ENCODE measurements at regions of chr7 and their contacts with region 1.

Region 1: DNA sequence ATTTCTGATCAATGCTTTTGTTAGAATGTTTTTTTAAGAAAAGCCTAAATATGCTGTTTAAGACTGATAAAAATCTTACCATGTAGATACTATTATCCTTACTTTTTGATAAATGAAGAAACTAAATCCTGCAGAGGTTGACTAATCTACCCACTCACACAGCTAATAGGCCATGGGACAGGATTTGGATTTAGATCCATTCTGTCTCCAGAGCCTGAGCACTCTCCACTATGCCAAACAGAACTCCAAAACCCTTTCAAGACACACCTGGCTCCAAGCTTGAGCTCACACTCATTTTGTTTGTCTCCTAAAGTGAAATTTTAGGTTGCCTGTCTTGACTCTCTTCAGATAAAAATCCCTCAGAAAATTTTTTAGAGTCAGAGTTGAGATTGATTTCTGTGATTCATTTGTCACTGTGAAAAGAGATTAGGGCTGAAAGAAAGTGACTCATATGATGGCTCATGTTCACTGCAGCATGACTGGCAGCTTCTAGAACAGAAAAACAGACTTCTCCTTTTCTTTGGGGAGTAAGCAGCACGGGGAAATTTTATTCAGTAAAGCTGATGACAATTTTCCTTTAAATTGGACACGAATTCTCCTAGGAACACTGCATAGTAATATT is 132.3 kb upstream of the POT1 start:
- DNase-seq: no peak
- H3K4me3 ChIP-seq: no peak overlapping the region
- H3K27ac ChIP-seq: peak overlapping the region in 1 of 2 experiments; percentile 57; a peak in 3 of 4 replicates
- H3K4me1 ChIP-seq: peaks cover 6 to 22% of the 10 kb centered on the region in 2 experiments; a peak in 3 of 4 replicates
- H3K27me3 ChIP-seq: no peaks in the 10 kb centered on the region
- CTCF ChIP-seq: no peak
- EP300 ChIP-seq: no peak
- RAD21 ChIP-seq: no peak

Region 2: DNA sequence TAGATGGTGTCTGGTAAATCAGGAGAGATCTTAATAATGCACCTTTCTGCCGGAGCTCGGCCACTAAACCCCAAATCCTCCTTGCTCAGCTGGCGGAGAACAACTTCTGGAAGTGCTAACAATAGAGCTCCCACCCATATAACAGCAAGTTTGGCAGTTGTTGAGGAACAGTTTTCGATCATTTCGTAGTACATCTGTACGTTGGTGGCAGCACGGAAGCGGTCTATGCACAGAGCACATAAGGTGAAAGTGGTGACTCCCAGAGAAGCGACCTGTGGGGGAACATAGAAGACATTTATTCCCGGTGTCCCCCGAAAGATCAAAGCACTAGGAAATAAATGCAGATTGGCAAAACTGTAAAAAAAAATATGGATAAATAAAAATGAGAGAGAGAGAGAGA is 314.8 kb before region 1 on chr7:
- CTCF ChIA-PET with region 1: no interaction called
- POLR2A ChIA-PET with region 1: no interaction called
- DNase-seq: no peak
- H3K4me3 ChIP-seq: no peak overlapping the region
- H3K27ac ChIP-seq: no peak overlapping the region
- H3K4me1 ChIP-seq: no peaks in the 10 kb centered on the region; a peak in 1 of 4 replicates
- H3K27me3 ChIP-seq: no peaks in the 10 kb centered on the region
- CTCF ChIP-seq: no peak
- EP300 ChIP-seq: no peak
- RAD21 ChIP-seq: no peak

Region 3: GRCh38 chr7:125316466-125316865 is 254.6 kb after region 1 on chr7:
- CTCF ChIA-PET with region 1: interaction called, 20 read pairs
- POLR2A ChIA-PET with region 1: no interaction called
- DNase-seq: peak; percentile 32
- H3K4me3 ChIP-seq: no peak overlapping the region; a peak in 1 of 4 replicates
- H3K27ac ChIP-seq: no peak overlapping the region
- H3K4me1 ChIP-seq: no peaks in the 10 kb centered on the region
- H3K27me3 ChIP-seq: no peaks in the 10 kb centered on the region
- CTCF ChIP-seq: no peak
- EP300 ChIP-seq: no peak
- RAD21 ChIP-seq: peak; percentile 74

Region 4: GRCh38 chr7:125670926-125671572 is 609.2 kb after region 1 on chr7:
- CTCF ChIA-PET with region 1: interaction called, 68 read pairs
- POLR2A ChIA-PET with region 1: no interaction called
- DNase-seq: peak; percentile 24
- H3K4me3 ChIP-seq: no peak overlapping the region; a peak in 1 of 4 replicates
- H3K27ac ChIP-seq: no peak overlapping the region
- H3K4me1 ChIP-seq: no peaks in the 10 kb centered on the region; a peak in 1 of 4 replicates
- H3K27me3 ChIP-seq: no peaks in the 10 kb centered on the region
- CTCF ChIP-seq: peak; percentile 94
- EP300 ChIP-seq: no peak
- RAD21 ChIP-seq: peak; percentile 89